Ovary (tissue), 10 donors: ENCODE measurements at regions of chr15 and their contacts with region 1.

Region 1: DNA sequence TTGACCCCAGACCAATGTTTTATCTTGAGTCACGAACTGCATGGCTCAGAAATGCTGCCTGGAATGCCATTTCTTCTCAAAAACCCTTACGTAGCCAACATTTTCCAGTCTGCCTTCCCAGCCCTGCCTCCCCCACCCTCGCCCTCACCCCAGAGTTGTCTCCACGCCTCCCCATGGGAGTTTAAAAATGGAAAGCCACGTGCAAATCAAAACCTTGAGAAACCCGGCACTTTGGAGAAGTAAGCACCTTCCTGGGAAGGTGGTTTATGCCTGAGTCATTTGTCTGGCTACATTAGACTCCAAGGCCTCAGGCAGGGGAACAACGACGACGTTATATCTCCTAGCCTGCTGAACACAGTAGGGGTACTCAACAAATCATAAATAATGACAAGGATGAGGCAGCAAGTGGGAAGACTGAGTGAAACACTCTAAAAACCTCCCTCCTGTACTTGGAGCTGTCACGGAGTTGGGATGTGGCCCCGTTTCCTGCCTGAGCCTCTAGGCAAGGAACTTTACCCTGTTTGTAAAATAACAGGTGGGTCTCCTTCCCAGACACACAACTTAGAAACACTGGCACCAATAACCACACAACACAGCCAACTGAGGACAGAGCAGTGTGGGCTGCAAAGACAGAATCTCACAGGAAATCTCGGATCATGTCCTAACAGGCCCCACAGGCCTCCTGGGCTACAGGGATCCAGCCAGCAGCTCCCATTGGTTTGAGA is 179.1 kb downstream of the NTRK3 start:
- DNase-seq: no peak
- H3K4me3 ChIP-seq: no peak overlapping the region
- H3K27ac ChIP-seq: no peak overlapping the region
- H3K4me1 ChIP-seq: peaks cover 2% of the 10 kb centered on the region
- H3K27me3 ChIP-seq: no peaks in the 10 kb centered on the region
- CTCF ChIP-seq: no peak
- EP300 ChIP-seq: no peak
- POLR2A ChIP-seq: no peak

Region 2: GRCh38 chr15:87939848-87940457 is 137.5 kb before region 1 on chr15:
- intact Hi-C with region 1: loop called in 1 of 4 experiments (anchors 10 kb)
- DNase-seq: no peak
- H3K4me3 ChIP-seq: no peak overlapping the region
- H3K27ac ChIP-seq: no peak overlapping the region
- H3K4me1 ChIP-seq: no peaks in the 10 kb centered on the region
- H3K27me3 ChIP-seq: no peaks in the 10 kb centered on the region
- CTCF ChIP-seq: no peak
- EP300 ChIP-seq: no peak
- POLR2A ChIP-seq: no peak